ENCODE measurements at regions of chr20 and their contacts with region 1.

Region 1: GRCh38 chr20:48904365-48905296 is 16.9 kb upstream of the ARFGEF2 start:
- DNase-seq: no peak

Region 2: DNA sequence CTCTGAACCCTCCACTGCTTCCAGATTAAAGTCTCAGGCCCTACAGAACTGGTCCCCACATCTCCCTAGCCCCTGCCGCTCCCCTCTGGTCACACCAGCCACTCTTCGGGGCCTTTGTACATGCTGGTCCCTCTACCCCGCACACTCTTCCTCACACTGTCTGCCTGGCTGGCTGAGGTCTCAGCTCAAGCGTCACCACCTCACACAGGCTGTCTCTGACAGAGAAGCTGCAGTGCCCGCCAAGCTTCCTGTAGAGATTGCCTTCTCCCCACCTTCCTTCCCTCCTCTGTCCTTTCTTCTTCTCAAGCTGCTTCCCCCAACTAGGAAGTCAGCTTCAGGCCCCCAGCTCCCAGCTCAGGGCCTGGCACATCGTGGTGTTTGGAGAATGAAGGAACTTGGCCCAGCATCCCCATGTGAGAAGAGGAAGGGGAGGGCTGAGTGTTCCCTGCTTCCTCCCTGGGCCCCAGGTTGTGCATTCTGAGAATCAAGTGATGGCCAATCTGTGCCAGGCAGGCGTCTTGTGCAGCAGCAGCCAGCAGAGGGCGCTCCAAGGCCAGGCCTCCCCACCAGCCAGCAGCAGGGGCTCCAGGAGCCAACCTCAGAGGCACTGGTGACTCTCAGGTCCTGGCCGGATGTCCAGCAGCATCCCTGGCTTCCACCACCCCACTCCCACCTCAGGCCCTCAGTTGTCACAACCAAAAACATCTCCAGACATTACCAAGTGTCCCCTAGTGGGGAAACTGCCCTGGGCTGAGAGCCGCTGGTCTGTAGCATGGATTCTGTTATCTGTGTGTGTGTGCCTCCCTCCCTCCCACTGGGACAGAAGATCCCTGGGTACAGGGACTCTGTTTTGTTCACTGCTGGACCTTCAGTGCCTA is 269.0 kb before region 1 on chr20:
- intact Hi-C with region 1: loop called (anchors 5 kb)
- DNase-seq: peak; percentile 85

Region 3: GRCh38 chr20:48657475-48658470 is 246.9 kb before region 1 on chr20:
- intact Hi-C with region 1: loop called (anchors 1 kb)
- DNase-seq: peak; percentile 85

Region 4: DNA sequence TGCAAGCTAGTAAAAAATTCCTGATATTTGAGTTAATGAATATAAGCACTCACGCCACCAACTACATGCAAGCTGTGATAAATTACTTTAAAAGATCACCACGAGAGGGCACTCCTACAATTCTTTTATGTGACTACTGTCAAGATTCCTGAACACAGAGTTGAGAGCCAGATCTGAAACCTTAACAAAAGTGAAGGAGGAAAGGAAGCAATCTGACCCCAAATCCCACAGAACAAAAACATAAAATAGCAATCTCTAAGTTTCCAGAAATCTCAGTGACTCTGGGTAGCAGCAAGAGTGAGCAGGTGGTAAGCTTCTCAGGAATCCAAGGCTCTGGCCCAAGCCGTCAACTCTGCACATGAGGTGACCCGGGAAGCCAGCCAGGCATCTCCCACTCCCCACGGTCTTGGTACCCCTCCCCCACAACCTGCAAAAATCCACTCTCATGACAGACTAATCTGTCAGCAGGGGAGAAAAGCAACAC is 228.4 kb after region 1 on chr20:
- intact Hi-C with region 1: no loop called
- DNase-seq: no peak

Measured in cardiac septum (tissue), 1 donor.